GM23248 (cell line): ENCODE measurements at regions of chr5 and their contacts with region 1.

Region 1: GRCh38 chr5:53262348-53262970 is 152.9 kb upstream of the MOCS2 start:
- DNase-seq: peak; percentile 80
- H3K4me3 ChIP-seq: no peak overlapping the region
- H3K27ac ChIP-seq: no peak overlapping the region
- H3K4me1 ChIP-seq: peaks cover 7% of the 10 kb centered on the region
- H3K27me3 ChIP-seq: no peaks in the 10 kb centered on the region

Region 2: GRCh38 chr5:54229041-54229780 is 966.8 kb after region 1 on chr5:
- in situ Hi-C with region 1: loop called (anchors 25 kb)
- DNase-seq: peak; percentile 71
- H3K4me3 ChIP-seq: no peak overlapping the region
- H3K27ac ChIP-seq: no peak overlapping the region
- H3K4me1 ChIP-seq: 0 out of 2 replicates have a peak, but pooled peaks cover 1% of the 10 kb centered on the region
- H3K27me3 ChIP-seq: no peaks in the 10 kb centered on the region